ENCODE measurements at regions of chrX and their contacts with region 1.

Region 1: GRCh38 chrX:70454441-70455365 is 10.1 kb downstream of the DLG3 start:
- DNase-seq: peak; percentile 91
- H3K4me3 ChIP-seq: peak overlapping the region; percentile 47 to 85 (median 61)
- H3K27ac ChIP-seq: peak overlapping the region; percentile 87 to 97 (median 94)
- H3K4me1 ChIP-seq: peaks cover 0 to 28% (median 3%) of the 10 kb centered on the region in 4 donors
- H3K27me3 ChIP-seq: no peaks in the 10 kb centered on the region
- CTCF ChIP-seq: peak; percentile 74 to 91 (median 78)
- EP300 ChIP-seq: no peak
- POLR2A ChIP-seq: peak; percentile 44

Region 2: GRCh38 chrX:70554081-70554480 is 99.4 kb after region 1 on chrX:
- in situ Hi-C with region 1: loop called in 2 of 4 experiments (anchors 10 kb)
- intact Hi-C with region 1: no loop called
- DNase-seq: no peak
- H3K4me3 ChIP-seq: no peak overlapping the region
- H3K27ac ChIP-seq: peak overlapping the region in 3 of 4 donors; percentile 51 to 65 (median 58)
- H3K4me1 ChIP-seq: peaks cover 0 to 8% (median 3%) of the 10 kb centered on the region in 4 donors
- H3K27me3 ChIP-seq: no peaks in the 10 kb centered on the region
- CTCF ChIP-seq: peak in 2 of 5 experiments; percentile 20 to 30
- EP300 ChIP-seq: no peak
- POLR2A ChIP-seq: no peak

Region 3: GRCh38 chrX:70720721-70721120 is 266.0 kb after region 1 on chrX:
- in situ Hi-C with region 1: no loop called
- intact Hi-C with region 1: no loop called
- DNase-seq: no peak
- H3K4me3 ChIP-seq: no peak overlapping the region
- H3K27ac ChIP-seq: no peak overlapping the region
- H3K4me1 ChIP-seq: no peaks in the 10 kb centered on the region
- H3K27me3 ChIP-seq: no peaks in the 10 kb centered on the region
- CTCF ChIP-seq: no peak
- EP300 ChIP-seq: no peak
- POLR2A ChIP-seq: no peak